ENCODE measurements at regions of chr4 and their contacts with region 1.

Region 1: GRCh38 chr4:11514779-11515419 is 86.2 kb upstream of the HS3ST1 start:
- DNase-seq: no peak

Region 2: DNA sequence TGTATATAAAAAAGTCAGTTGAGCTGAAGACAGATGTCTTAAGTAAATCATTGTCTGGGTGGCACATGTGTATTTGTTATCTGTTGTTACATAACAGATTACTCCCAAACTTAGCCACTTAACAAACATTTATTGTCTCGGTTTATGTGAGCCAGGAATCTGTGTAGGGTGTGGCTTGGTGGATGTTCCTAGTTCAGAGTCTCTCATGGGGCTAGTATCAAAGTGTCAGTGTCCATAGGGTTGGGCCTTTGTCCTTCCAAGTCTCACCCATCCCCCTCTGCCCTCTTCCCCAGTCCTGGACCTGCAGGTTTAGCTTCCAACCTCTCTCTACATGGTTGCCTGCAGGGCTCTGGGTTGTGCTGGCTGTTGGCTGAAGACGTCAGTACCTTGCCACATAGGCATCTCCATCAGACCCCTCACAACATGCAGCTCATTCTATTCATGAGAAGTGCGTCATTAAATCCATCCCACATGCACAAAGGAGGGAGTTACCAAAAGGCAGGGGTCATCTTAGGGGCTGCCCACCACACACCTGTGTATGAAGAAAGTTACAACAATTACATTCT is 213.7 kb before region 1 on chr4:
- intact Hi-C with region 1: loop called (anchors 10 kb)
- DNase-seq: no peak

Region 3: DNA sequence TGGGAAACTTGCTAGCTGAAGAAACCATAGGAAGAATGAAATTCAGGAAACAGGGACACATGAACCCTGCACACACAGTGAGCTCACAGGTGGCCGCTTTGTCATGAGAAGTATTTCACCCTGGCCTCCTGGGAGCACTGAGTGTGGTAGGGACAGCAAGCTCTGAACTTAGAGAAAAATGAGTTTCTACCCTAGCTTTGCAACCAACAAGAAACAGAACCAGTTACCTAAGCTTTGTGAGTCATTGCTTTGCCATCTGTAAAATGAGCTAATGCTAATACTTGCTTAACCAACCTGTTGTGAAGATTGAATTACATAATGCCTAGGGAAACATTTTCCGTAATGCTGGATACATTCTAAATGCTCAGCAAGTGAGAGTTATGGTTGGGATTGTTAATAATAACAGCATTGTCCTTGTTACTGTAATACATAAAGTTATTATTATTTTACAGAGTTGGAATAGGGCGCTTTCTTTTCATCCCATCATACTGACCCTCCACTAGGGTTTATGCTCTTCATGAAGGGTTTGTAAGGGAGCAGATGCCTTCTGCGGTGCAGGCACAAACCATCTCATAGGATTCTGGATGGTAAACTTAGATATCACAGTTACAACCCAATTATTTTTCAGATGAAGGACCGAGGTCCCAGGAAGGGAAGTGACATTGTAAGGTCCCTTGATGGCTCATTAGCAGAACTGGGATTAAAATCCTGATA is 120.6 kb after region 1 on chr4:
- intact Hi-C with region 1: no loop called
- DNase-seq: no peak

Measured in cardiac septum (tissue), 1 donor.